Upper lobe of right lung (tissue), 1 donor: ENCODE measurements at regions of chr16 and their contacts with region 1.

Region 1: GRCh38 chr16:21088646-21089538 is 61.8 kb downstream of the DNAH3 start:
- DNase-seq: no peak
- ATAC-seq: no peak
- H3K4me3 ChIP-seq: no peak overlapping the region
- H3K27ac ChIP-seq: no peak overlapping the region
- H3K4me1 ChIP-seq: no peaks in the 10 kb centered on the region
- H3K27me3 ChIP-seq: no peaks in the 10 kb centered on the region
- CTCF ChIP-seq: no peak

Region 2: GRCh38 chr16:20849587-20850390 is 239.1 kb before region 1 on chr16:
- intact Hi-C with region 1: loop called (anchors 5 kb)
- DNase-seq: peak; percentile 72
- ATAC-seq: peak; percentile 81
- H3K4me3 ChIP-seq: no peak overlapping the region
- H3K27ac ChIP-seq: peak overlapping the region; percentile 89
- H3K4me1 ChIP-seq: peaks cover 56% of the 10 kb centered on the region
- H3K27me3 ChIP-seq: no peaks in the 10 kb centered on the region
- CTCF ChIP-seq: peak; percentile 99